Calu3 (cell line): ENCODE measurements at regions of chr16 and their contacts with region 1.

Region 1: GRCh38 chr16:74709441-74709877 is 8.8 kb upstream of the MLKL start:
- DNase-seq: peak; percentile 89
- H3K4me3 Mint-ChIP-seq: no peak overlapping the region
- H3K27ac Mint-ChIP-seq: peak overlapping the region; percentile 24
- H3K4me1 Mint-ChIP-seq: peaks cover 11% of the 10 kb centered on the region
- H3K27me3 Mint-ChIP-seq: no peaks in the 10 kb centered on the region
- CTCF ChIP-seq: peak; percentile 97

Region 2: DNA sequence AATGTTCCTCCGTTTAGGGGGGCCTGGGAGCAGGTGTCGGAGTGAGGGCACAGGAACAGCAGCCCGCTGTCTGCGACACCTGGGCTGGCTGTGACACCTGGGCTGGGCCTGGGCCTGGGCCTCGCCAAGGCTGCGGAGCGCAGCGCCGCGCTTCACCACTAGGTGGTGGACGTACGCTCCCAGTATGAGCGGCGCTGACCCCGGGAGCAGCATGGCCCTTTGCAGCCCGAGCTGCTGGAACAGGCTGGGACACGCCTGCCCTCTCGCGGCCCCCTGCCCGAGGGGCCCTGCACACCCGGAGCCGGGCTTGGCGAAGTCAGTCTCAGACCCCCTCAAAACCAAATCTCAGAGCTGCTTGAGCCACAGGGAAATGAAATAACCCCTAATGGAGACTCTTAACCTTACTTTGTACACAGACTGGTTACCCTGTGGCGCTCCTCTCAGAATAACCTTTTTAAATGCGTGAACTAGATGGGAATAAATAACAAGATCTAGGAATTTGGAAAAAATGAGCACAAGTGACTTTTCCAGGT is 103.7 kb after region 1 on chr16:
- CTCF ChIA-PET with region 1: interaction called, 7 read pairs
- intact Hi-C with region 1: loop called (anchors 1 kb)
- DNase-seq: peak; percentile 96
- H3K4me3 Mint-ChIP-seq: no peak overlapping the region
- H3K27ac Mint-ChIP-seq: peak overlapping the region; percentile 24
- H3K4me1 Mint-ChIP-seq: peaks cover 9% of the 10 kb centered on the region
- H3K27me3 Mint-ChIP-seq: peaks cover 30% of the 10 kb centered on the region
- CTCF ChIP-seq: peak; percentile 97